AG04449 (cell line): ENCODE measurements at regions of chr17 and their contacts with region 1.

Region 1: DNA sequence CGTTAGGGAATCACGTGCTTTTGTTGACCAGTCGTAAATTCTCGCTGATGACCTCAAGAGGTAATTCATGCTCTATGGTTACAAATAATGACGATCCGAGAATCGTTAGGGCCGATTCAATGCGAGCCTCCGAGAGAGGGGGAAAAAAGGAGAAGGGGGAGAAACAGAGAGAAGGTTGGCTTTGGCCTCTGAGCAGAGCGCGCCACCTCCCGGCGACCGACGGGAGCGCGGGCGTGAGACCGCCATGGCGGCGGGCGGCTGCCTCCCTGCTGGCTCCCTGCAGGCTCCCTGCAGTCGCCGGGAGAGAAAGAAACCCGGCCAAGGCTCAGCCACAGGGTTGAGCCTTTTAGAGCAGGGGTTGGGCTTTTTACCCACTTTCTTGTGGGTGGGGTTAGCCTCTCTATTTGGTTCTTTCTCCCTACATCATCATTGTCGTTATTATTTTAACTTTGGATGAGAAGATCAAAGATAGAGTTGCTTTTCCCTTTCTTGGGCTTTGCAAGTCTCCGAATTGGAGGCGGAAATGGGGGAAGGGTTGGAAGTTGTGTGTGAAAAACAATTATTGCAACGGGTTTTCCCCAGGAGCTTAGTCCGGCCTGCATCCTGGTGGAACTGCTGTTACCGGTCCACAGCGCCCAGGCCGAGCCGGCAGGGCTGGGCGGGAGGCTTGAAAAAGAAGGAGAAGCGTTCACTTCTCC is 410 bp upstream of the HOXB5 start:
- DNase-seq: peak; percentile 63
- H3K4me3 ChIP-seq: peak overlapping the region; percentile 76
- CTCF ChIP-seq: peak; percentile 99

Region 2: DNA sequence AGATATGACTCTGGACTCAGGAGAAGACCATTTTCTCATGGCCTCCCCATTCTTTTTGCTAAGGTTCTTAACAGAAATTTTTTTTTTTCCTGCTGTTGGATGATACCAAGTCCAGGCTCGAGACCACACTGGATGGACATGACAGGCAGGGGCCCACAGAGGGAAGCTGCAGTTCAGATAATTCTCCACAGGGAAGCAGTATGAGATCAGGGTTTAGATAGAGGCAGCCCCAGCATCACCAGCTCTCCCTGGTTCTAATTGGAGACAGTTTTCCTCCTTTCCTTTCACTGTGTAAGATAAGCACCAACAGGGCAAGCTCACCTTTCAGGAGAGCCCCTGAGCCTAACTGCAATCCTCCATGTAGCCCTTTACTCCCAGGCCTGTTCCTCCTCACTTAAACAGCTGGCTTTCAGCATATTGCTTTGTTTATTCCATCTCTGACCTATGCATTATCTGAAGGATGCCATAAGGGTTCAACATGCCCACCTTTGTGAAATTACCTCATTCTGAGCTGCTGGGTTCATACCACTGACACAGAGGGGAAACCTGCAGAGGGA is 378.3 kb before region 1 on chr17:
- CTCF ChIA-PET with region 1: interaction called, 12 read pairs
- POLR2A ChIA-PET with region 1: no interaction called
- DNase-seq: no peak
- H3K4me3 ChIP-seq: no peak overlapping the region
- CTCF ChIP-seq: peak; percentile 57

Region 3: DNA sequence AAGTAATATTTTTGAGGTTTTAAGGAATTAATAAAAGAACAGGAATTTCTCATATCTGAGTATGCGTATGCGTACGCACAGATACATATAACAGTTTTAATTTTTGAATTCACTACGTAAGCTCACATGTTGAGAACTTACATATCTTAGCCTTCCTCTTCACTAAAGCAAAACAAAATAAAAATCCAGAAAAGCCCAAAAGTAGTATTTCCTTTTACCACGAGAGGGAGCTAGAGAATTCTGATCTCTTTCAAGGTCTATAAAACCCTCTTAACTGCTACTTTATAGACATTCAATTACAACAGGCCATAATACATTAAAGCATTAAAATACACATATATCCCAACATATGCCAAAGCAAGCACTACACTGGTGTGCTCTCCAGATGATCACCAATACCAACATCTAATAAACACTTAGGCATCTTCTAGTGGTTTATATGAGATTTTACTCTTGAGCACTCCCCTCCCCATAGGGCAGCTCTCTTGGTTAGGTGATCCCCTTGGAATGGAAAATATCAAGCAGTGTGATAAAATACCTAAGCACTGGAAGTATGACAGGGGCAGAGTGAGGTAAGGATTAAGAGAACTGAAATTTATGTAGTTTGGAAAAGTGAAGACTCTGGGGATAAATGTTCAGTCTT is 258.0 kb before region 1 on chr17:
- CTCF ChIA-PET with region 1: interaction called, 28 read pairs
- POLR2A ChIA-PET with region 1: interaction called, 3 read pairs
- DNase-seq: no peak
- H3K4me3 ChIP-seq: no peak overlapping the region
- CTCF ChIP-seq: peak; percentile 38

Region 4: DNA sequence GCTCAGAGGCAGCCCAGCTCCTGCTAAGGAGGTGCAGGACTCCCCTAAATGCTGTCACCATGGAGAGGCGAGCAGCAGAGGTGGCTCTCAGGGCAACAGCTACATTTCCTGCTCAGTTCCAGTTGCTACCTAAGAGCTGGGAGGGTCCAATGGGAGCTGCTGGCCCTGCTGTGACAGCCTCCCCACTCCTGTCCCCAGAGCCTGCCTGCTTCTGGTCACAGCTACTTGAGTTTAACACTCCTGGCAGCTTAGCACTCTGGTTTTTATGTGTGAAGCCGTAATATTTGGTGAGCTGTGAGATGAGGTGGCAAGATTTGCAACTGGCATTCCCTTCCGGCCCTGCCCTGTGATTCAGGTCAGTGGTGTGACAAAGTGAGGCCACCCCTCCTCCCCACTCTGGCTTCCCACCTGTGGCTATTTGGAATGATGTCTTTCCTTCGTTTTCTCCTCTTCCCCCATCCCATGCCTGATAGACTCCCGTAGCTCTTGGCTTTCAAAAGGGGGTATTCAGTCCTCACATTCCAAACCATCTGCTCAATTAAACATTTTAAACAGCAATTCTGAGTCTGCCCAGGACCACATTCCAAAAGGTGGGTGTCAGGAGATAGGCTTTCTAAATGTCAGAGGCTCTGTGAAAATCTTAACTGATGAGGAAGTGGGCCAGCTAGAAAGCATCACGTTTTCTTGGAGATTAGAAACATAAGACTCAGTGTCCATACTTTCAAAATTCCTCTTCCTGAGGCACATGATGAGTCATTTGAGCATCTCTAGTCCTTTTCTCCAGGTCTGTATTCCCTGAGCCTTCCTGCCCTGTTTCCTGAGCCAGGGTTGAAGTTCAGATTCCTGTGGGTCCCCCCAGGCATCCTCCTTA is 121.3 kb before region 1 on chr17:
- CTCF ChIA-PET with region 1: interaction called, 19 read pairs
- POLR2A ChIA-PET with region 1: interaction called, 4 read pairs
- DNase-seq: no peak
- H3K4me3 ChIP-seq: no peak overlapping the region
- CTCF ChIP-seq: no peak

Region 5: DNA sequence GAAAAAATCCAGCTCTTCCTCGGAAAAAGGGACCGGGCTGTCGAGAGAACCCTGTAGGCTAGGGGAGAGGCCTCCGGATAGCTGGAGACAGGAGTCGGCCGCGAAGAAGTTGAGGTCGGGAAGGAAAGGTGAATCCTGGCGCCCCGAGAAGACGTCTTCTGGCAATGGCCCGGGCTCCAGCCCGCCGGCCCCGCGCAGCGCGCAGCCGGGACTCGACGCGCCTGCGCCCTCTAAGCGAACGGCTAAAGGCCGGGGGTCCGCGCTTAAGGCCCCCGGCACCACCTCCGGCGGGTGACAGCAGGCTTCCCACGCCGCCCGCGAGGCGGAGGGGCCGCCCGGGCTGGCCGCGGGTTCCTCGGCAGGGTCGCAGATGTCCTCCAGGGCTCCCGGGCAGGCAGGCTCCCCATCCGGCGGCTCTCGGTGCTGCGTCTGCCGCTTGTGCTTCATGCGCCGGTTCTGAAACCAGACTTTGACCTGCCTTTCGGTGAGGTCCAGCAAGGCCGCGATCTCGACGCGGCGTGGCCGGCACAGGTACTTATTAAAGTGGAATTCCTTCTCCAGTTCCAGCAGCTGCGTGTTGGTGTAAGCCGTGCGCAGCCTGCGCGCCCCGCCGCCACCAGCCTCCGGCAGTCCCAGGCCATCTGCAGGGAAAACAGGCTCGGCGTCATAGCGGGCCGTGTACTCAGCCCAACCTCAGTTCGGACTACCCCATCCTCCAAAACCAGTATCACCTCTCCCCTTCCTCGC is 50.7 kb before region 1 on chr17:
- CTCF ChIA-PET with region 1: interaction called, 10 read pairs
- POLR2A ChIA-PET with region 1: interaction called, 14 read pairs
- DNase-seq: no peak
- H3K4me3 ChIP-seq: peak overlapping the region; percentile 84
- CTCF ChIP-seq: no peak

Region 6: GRCh38 chr17:48610282-48611211 is 16.6 kb after region 1 on chr17 and contains the start of gene HOXB7:
- CTCF ChIA-PET with region 1: interaction called, 62 read pairs
- POLR2A ChIA-PET with region 1: interaction called, 8 read pairs
- DNase-seq: no peak
- H3K4me3 ChIP-seq: peak within 1 kb of the TSS; percentile 67
- CTCF ChIP-seq: no peak